Sciatic nerve (tissue), 2 donors: ENCODE measurements at regions of chr3 and their contacts with region 1.

Region 1: GRCh38 chr3:171566803-171567422 is 106.7 kb upstream of the TNIK start:
- DNase-seq: no peak
- ATAC-seq: peak; percentile 59

Region 2: GRCh38 chr3:170961616-170962400 is 605.1 kb before region 1 on chr3:
- intact Hi-C with region 1: loop called (anchors 10 kb)
- DNase-seq: no peak
- ATAC-seq: peak; percentile 81

Region 3: DNA sequence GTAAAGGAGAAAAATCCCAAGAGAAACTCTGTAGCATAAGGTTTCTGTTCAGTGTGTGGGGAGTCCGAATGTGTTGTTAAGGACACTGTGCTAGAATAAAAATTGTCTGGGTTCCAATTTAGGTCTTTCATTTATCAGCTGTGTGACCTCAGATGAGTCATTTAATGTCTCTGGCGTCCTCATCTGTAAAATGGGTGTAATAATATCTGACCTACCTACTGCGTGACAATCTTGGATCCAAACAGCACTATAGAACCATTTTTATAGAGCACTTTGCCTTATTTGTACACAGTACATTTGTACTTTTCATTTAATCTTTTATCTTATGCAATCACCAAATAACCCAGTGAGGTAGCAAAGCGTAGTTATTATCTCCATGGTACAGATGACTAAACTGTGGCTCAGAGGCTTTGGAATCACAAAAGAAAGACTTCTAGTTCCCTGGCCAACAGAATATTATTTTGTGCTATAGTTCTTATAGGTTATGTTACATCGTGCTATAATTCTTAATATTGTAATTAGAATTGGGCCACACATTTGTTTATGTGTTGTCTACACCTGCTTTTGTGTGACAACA is 60.1 kb before region 1 on chr3:
- intact Hi-C with region 1: no loop called
- DNase-seq: no peak
- ATAC-seq: no peak